HAP-1 (cell line): ENCODE measurements at regions of chr20 and their contacts with region 1.

Region 1: DNA sequence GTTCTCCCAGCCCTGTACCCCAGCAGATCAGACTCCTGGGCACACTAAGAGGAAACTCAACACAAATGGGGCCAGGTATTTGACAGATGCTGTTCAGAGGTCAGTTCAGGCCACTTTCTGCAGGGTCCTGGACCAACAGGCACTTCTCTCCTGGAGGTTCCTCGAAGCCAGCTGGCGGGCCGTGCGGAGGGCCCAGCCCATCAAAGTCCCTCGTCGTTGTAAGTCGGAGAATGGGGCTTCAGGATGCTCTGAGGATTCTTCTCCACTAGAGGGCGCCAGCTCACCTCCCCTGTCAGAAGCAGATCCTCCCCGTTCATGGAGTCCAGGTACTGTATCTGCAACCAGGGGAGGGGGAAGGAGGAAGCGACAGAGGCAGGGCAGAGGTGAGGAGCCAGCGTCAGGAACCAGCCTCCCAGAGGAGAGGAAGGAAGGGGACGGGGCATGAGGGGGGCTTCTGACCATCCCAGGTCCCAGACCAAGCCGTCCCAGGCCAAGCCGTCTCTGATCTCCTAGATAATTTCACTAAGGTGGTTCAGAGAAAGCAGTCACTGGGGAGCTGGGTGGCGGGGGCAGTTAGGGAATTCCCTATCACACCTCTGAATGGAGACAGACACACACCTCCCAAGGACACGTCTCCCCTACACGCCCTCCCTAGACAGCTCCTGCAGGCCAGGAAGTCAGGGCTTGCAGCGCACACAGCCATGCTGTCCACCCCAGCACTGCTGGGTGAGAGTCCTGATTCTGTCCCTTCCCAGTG is 11.7 kb upstream of the FAM83C start:
- DNase-seq: peak; percentile 74 to 89
- H3K4me3 ChIP-seq: no peak overlapping the region
- H3K4me1 ChIP-seq: no peaks in the 10 kb centered on the region
- H3K27me3 ChIP-seq: no peaks in the 10 kb centered on the region

Region 2: GRCh38 chr20:35432430-35432735 is 128.5 kb after region 1 on chr20:
- in situ Hi-C with region 1: loop called (anchors 5 kb)
- DNase-seq: no peak
- H3K4me3 ChIP-seq: no peak overlapping the region
- H3K4me1 ChIP-seq: no peaks in the 10 kb centered on the region
- H3K27me3 ChIP-seq: no peaks in the 10 kb centered on the region